ENCODE measurements at regions of chr22 and their contacts with region 1.

Region 1: DNA sequence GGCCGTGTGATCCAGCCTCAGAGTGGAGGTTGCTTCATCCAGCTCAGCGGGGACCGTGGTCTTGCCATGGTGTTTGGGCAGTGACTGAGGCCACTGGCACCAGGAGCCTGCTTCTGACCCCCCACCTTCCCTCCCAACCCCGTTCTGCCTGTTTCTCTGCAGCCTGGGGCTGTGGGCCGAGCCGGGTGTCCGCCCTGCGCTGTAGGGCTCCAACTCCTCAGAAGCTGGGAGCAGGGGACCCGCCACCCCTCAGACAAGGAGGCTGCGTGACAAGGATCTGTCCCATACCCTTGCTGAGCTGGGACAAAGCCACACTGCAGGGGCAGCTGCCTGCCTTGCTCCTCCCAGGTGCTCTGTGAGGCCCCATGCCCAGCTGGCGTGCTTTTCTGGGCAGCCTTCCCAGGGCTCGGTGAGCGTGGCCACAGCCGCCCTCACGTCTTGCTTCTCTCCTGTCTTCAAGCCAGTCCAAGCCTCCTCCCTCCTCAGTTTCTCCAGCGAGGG is 11.7 kb upstream of the ARFGAP3 start:
- DNase-seq: no peak
- H3K4me3 Mint-ChIP-seq: no peak overlapping the region
- H3K27ac Mint-ChIP-seq: no peak overlapping the region
- H3K4me1 Mint-ChIP-seq: peaks cover 2% of the 10 kb centered on the region
- H3K27me3 Mint-ChIP-seq: no peaks in the 10 kb centered on the region

Region 2: GRCh38 chr22:42829302-42829701 is 39.5 kb before region 1 on chr22:
- intact Hi-C with region 1: no loop called
- DNase-seq: no peak
- H3K4me3 Mint-ChIP-seq: no peak overlapping the region
- H3K27ac Mint-ChIP-seq: no peak overlapping the region
- H3K4me1 Mint-ChIP-seq: peaks cover 3% of the 10 kb centered on the region
- H3K27me3 Mint-ChIP-seq: no peaks in the 10 kb centered on the region

Region 3: GRCh38 chr22:43031617-43032016 is 162.8 kb after region 1 on chr22:
- intact Hi-C with region 1: loop called (anchors 5 kb)
- DNase-seq: no peak
- H3K4me3 Mint-ChIP-seq: no peak overlapping the region
- H3K27ac Mint-ChIP-seq: no peak overlapping the region
- H3K4me1 Mint-ChIP-seq: no peaks in the 10 kb centered on the region
- H3K27me3 Mint-ChIP-seq: no peaks in the 10 kb centered on the region

Measured in activated T-helper 2 cell treated with anti-CD3 and anti-CD28 coated beads, Interferon-gamma antibody, Interleukin-2, Interleukin-4, amounts not matched to agents 10 μg/mL and 5 μg/mL and 100 μg/mL, durations not matched to agents 14 hours and 24 hours and 36 hours (primary cell).